ENCODE measurements at regions of chr20 and their contacts with region 1.

Region 1: DNA sequence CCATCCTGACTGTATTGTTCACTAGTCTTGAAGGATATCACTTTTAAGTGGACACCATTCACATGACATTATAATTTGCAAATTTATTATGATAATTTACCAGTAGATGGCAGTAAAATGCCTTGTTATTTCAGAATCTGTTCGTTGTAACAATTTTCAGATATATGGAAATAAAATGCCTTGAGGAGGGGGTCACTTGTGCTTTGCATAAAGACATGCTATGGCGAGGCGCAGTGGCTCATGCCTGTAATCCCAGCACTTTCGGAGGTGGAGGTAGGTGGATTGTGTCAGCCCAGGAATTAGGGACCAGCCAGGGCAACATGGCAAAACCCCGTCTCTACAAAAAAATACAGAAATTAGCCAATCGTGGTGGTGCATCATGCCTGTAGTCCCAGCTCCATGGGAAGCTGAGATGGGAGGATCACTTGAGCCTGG is 9.0 kb upstream of the NCOA6 start:
- DNase-seq: peak; percentile 45
- ATAC-seq: peak; percentile 80
- H3K4me3 ChIP-seq: no peak overlapping the region
- H3K27ac ChIP-seq: no peak overlapping the region
- H3K4me1 ChIP-seq: no peaks in the 10 kb centered on the region; the same call in 1 of the 2 replicates
- H3K27me3 ChIP-seq: peaks cover 15% of the 10 kb centered on the region
- CTCF ChIP-seq: peak; percentile 45
- POLR2A ChIP-seq: no peak
- RAD21 ChIP-seq: peak; percentile 60

Region 2: DNA sequence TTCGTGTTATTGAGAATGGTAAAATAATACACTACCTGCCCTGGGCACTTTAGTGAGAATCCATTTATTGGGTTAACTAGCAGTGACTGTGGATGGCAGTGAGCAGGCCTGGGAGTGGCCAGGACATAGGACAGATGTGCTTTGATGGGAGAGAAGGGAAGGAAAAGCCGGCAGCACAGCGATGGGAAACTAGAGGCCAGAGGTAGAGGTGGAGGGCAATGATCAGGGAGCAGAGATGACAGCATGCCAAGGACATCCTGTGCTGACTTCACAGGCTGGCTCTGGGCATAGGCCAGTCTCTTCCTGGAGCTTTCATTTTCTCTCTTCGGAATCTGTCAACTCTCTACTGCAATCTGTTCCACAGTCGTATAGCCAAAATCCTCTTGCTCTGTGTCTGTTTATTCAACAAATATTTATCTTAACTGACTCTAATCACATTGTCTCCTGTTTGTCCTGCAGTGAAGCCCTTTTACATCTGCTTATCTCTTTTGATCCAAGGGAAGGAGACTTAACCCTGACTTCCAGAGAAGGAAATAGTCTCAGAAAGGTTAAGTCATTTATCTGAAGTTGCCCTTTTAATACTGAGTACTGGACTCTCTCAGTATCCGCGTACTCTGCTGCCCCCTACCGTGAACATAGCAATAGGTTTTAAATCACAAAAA is 373.6 kb after region 1 on chr20:
- CTCF ChIA-PET with region 1: no interaction called
- POLR2A ChIA-PET with region 1: no interaction called
- dilution Hi-C with region 1: no loop called
- in situ Hi-C with region 1: no loop called
- intact Hi-C with region 1: loop called (anchors 5 kb)
- DNase-seq: peak; percentile 78
- ATAC-seq: peak; percentile 98
- H3K4me3 ChIP-seq: no peak overlapping the region
- H3K27ac ChIP-seq: peak overlapping the region; percentile 39
- H3K4me1 ChIP-seq: peaks cover 3% of the 10 kb centered on the region; the same call in 1 of the 2 replicates
- H3K27me3 ChIP-seq: no peaks in the 10 kb centered on the region
- CTCF ChIP-seq: peak; percentile 94
- POLR2A ChIP-seq: 0 out of 2 replicates have a peak, but pooled peaks have one; percentile 32
- RAD21 ChIP-seq: peak; percentile 97

Measured in IMR-90 (cell line).